Calu3 (cell line): ENCODE measurements at regions of chr1 and their contacts with region 1.

Region 1: GRCh38 chr1:12124693-12125421 is 41.9 kb upstream of the TNFRSF1B start:
- DNase-seq: peak; percentile 71
- H3K4me3 Mint-ChIP-seq: no peak overlapping the region
- H3K27ac Mint-ChIP-seq: no peak overlapping the region
- H3K4me1 Mint-ChIP-seq: peaks cover 12% of the 10 kb centered on the region
- H3K27me3 Mint-ChIP-seq: peaks cover 33% of the 10 kb centered on the region
- CTCF ChIP-seq: peak; percentile 88

Region 2: DNA sequence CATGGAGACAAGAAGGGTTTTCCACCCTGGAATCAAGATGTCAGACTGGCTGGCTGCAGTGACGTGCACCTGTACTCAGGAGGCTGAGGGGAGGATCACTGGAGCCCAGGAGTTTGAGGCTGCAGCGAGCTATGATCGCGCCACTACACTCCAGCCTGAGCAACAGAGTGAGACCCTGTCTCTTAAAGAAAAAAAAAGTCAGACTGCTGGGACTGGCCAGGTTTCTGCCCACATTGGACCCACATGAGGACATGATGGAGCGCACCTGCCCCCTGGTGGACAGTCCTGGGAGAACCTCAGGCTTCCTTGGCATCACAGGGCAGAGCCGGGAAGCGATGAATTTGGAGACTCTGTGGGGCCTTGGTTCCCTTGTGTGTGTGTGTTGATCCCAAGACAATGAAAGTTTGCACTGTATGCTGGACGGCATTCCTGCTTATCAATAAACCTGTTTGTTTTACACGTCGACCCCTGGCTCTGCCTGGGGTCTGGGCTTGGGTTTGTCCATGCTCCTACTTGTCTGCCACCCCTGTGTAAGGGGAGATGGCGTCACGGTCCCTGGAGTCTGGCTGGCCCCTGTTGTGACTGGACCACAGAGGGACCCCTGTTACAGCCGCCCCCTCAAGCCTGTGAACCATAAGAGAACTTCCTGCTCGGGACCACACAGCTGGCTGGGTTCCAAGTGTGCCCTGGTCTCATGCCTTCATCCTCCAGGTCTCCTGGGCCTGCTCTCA is 84.1 kb after region 1 on chr1:
- CTCF ChIA-PET with region 1: interaction called, 18 read pairs
- intact Hi-C with region 1: loop called (anchors 1 kb)
- DNase-seq: peak; percentile 87
- H3K4me3 Mint-ChIP-seq: no peak overlapping the region
- H3K27ac Mint-ChIP-seq: no peak overlapping the region
- H3K4me1 Mint-ChIP-seq: no peaks in the 10 kb centered on the region
- H3K27me3 Mint-ChIP-seq: peaks cover 42% of the 10 kb centered on the region
- CTCF ChIP-seq: peak; percentile 82